Left ventricle myocardium superior (tissue), 1 donor: ENCODE measurements at regions of chr20 and their contacts with region 1.

Region 1: GRCh38 chr20:44187051-44187762 is at the start of gene JPH2:
- DNase-seq: peak; percentile 81
- ATAC-seq: peak; percentile 83
- total RNA-seq, gene JPH2: 182 TPM

Region 2: GRCh38 chr20:44123251-44123650 is 64.0 kb before region 1 on chr20:
- intact Hi-C with region 1: loop called (anchors 5 kb)
- DNase-seq: no peak
- ATAC-seq: peak; percentile 2